Calu3 (cell line): ENCODE measurements at regions of chr5 and their contacts with region 1.

Region 1: GRCh38 chr5:134041570-134042411 is 37.0 kb upstream of the VDAC1 start:
- DNase-seq: no peak
- H3K4me3 Mint-ChIP-seq: no peak overlapping the region
- H3K27ac Mint-ChIP-seq: no peak overlapping the region
- H3K4me1 Mint-ChIP-seq: peaks cover 23% of the 10 kb centered on the region
- H3K27me3 Mint-ChIP-seq: no peaks in the 10 kb centered on the region
- CTCF ChIP-seq: no peak

Region 2: DNA sequence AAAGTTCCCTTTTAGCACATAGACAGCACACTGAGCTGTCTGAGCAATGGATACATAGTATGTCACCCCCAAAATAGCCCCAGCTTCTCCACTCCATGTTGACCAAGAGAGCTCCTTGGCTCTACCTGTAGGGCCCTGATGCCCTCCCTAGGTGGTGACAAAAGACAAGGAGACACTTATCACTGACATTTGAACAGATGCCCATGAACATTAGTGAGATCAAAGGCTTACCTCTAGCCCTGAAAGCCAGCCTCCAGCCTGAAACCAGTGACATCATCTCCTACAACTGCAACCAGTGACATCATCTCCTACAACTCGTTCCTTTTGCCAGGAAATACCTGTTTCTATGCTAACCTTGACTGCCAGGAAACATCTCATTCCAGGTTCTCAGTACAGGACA is 552.2 kb before region 1 on chr5:
- CTCF ChIA-PET with region 1: no interaction called
- intact Hi-C with region 1: no loop called
- DNase-seq: peak; percentile 32
- H3K4me3 Mint-ChIP-seq: no peak overlapping the region
- H3K27ac Mint-ChIP-seq: no peak overlapping the region
- H3K4me1 Mint-ChIP-seq: no peaks in the 10 kb centered on the region
- H3K27me3 Mint-ChIP-seq: peaks cover 67% of the 10 kb centered on the region
- CTCF ChIP-seq: no peak

Region 3: DNA sequence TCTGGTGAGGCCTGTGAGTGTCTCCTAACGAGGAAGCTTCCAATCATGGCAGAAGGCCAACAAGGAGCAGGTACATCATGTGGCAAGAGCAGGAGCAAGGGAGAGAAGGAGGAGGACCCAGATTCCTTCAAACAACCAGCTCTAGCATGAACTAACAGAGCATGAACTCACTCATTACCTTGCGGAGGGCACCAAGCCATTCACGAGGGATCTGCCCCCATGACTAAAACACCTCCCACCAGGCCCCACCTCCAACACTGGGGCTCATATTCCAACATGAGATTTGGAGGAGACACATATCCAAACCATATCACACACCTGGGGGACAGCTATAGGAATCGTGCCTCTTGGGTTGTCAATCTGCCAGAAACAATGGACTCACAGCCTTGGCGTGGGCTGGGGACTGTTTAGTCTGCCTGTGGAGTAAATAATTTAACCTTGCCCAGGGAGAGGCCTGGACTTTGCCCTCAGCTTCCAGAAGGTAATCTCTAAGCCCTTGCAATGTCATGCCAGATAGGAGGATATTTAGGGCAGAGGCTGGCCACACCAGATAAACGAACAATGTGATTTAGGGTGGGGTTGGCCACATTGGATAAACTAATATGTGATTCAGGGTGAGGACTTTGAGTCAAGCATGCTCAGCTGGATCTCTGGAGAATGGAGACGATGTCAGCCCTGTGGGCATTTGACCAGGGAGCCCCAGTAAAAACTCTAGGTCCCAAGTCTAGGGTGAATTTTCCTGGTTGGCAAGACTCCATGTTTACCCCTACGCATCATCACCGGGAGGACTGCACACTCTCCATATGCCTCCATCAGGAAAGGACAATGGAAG is 23.4 kb before region 1 on chr5:
- CTCF ChIA-PET with region 1: interaction called, 13 read pairs
- intact Hi-C with region 1: no loop called
- DNase-seq: peak; percentile 75
- H3K4me3 Mint-ChIP-seq: peak overlapping the region; percentile 15
- H3K27ac Mint-ChIP-seq: peak overlapping the region; percentile 86
- H3K4me1 Mint-ChIP-seq: peaks cover 41% of the 10 kb centered on the region
- H3K27me3 Mint-ChIP-seq: no peaks in the 10 kb centered on the region
- CTCF ChIP-seq: no peak

Region 4: DNA sequence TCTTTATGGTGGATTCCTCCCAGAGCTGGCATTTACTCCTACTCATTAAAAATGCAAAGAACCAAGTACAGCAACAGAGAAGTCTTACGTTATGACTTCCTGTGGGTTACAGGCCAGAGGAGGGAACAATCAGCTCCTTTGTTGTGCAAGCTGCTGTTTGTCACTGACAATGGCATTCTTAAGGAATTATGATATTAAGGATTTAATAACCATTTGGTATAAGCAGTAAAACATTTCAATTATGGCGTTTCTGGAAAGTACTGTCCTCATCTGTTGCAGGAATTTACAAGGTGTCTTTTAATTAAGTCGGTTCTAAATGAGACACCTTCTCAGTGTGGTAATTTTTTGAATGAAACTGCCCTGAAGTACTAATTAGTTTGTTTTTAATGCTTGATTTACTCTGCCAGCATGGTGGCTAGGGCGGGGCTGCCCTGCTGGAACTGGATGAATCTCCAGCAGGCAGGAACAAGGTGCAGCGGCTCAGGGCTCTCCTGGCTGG is 12.1 kb after region 1 on chr5:
- CTCF ChIA-PET with region 1: interaction called, 23 read pairs
- intact Hi-C with region 1: no loop called
- DNase-seq: peak; percentile 68
- H3K4me3 Mint-ChIP-seq: peak overlapping the region; percentile 18
- H3K27ac Mint-ChIP-seq: peak overlapping the region; percentile 97
- H3K4me1 Mint-ChIP-seq: peaks cover 53% of the 10 kb centered on the region
- H3K27me3 Mint-ChIP-seq: no peaks in the 10 kb centered on the region
- CTCF ChIP-seq: no peak

Region 5: DNA sequence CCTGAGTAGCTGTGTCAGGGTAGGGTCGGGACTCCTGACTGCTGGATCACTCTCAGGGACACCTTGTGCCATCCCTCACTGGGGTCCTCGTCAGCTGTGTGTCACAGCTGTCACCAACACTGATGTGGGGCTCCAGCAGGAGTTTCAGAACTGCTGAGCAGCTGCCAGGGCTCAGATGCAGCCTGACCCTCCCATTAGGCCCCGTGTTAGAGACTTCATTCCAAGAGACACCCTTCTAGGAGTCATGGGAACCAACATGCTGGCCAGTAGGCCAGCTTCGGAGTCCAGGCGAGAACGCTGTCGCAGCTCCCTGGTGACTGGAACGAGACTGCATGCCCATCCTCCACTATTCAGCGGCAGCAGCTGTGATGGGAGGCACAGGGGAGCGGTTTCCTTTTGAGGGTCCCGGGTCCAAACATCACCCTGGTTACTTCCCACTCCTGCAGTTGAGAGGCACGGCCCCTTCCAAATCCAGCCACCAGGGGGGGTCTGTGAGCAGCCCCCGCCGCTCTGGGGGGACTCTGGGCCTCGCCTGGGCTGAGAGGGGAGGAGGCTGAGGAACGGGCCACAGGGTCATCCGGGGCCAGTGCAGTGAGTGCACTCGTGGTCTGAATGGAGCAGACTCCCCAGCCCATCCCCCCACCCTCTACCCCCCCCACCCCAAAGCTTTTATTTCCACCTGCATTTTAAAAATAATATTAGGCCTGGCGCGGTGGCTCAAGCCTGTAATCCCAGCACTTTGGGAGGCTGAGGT is 60.1 kb after region 1 on chr5:
- CTCF ChIA-PET with region 1: interaction called, 15 read pairs
- intact Hi-C with region 1: no loop called
- DNase-seq: peak; percentile 79
- H3K4me3 Mint-ChIP-seq: no peak overlapping the region
- H3K27ac Mint-ChIP-seq: no peak overlapping the region
- H3K4me1 Mint-ChIP-seq: peaks cover 28% of the 10 kb centered on the region
- H3K27me3 Mint-ChIP-seq: no peaks in the 10 kb centered on the region
- CTCF ChIP-seq: peak; percentile 93

Region 6: DNA sequence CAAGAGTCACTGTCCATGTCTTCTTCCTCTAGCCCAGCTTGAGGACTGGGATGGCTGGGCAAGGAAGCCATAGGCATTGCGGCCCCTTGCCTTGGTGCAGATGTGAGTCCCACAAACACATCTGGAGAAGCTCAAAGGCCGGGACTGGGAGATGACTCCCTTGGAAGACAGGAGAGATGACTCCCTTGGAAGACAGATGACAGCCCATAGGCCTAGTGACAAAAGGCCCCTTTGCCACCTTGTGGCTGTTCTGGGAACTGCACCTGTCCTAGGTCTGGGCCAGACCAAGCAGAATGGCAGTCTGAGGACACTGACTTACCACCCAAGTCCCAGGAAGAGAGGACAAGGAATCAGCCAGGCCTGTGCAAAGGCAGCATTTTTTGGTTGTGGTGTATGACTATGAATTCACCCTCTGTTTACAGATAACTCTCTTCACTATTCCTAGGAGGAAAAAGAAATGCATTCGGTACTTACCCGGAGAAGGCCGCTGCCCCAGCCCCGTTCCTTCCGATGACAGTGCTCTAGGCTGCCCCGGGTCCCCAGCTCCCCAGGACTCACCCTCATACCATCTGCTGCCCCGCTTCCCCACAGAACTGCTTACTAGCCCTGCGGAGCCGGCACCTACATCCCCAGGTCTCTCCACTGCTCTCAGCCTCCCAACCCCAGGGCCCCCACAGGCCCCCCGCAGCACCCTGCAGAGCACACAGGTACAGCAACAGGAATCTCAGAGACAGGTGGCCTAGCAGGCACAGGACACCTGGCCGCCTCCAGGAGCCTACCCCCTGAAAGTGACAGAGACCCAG is 104.2 kb after region 1 on chr5:
- CTCF ChIA-PET with region 1: interaction called, 126 read pairs
- intact Hi-C with region 1: loop called (anchors 1 kb)
- DNase-seq: peak; percentile 87
- H3K4me3 Mint-ChIP-seq: no peak overlapping the region
- H3K27ac Mint-ChIP-seq: no peak overlapping the region
- H3K4me1 Mint-ChIP-seq: peaks cover 48% of the 10 kb centered on the region
- H3K27me3 Mint-ChIP-seq: no peaks in the 10 kb centered on the region
- CTCF ChIP-seq: peak; percentile 98